ENCODE measurements at regions of chr15 and their contacts with region 1.

Region 1: GRCh38 chr15:31128919-31129768 is 27.6 kb upstream of the TRPM1 start:
- DNase-seq: peak; percentile 59 to 89 (median 74)
- ATAC-seq: peak; percentile 92
- H3K4me3 ChIP-seq: no peak overlapping the region
- H3K4me3 Mint-ChIP-seq: no peak overlapping the region
- H3K27ac ChIP-seq: no peak overlapping the region
- H3K27ac Mint-ChIP-seq: no peak overlapping the region
- H3K4me1 ChIP-seq: no peaks in the 10 kb centered on the region
- H3K4me1 Mint-ChIP-seq: peaks cover 5% of the 10 kb centered on the region
- H3K27me3 ChIP-seq: no peaks in the 10 kb centered on the region
- H3K27me3 Mint-ChIP-seq: no peaks in the 10 kb centered on the region
- CTCF ChIP-seq: peak; percentile 86

Region 2: GRCh38 chr15:30889196-30889595 is 239.9 kb before region 1 on chr15:
- CTCF ChIA-PET with region 1: interaction called, 16 read pairs
- POLR2A ChIA-PET with region 1: no interaction called
- intact Hi-C with region 1: loop called in 1 of 2 experiments (anchors 10 kb)
- DNase-seq: no peak
- ATAC-seq: no peak
- H3K4me3 ChIP-seq: no peak overlapping the region
- H3K4me3 Mint-ChIP-seq: no peak overlapping the region
- H3K27ac ChIP-seq: no peak overlapping the region
- H3K27ac Mint-ChIP-seq: no peak overlapping the region
- H3K4me1 ChIP-seq: no peaks in the 10 kb centered on the region
- H3K4me1 Mint-ChIP-seq: no peaks in the 10 kb centered on the region
- H3K27me3 ChIP-seq: no peaks in the 10 kb centered on the region
- H3K27me3 Mint-ChIP-seq: peaks cover 6% of the 10 kb centered on the region
- CTCF ChIP-seq: no peak

Region 3: DNA sequence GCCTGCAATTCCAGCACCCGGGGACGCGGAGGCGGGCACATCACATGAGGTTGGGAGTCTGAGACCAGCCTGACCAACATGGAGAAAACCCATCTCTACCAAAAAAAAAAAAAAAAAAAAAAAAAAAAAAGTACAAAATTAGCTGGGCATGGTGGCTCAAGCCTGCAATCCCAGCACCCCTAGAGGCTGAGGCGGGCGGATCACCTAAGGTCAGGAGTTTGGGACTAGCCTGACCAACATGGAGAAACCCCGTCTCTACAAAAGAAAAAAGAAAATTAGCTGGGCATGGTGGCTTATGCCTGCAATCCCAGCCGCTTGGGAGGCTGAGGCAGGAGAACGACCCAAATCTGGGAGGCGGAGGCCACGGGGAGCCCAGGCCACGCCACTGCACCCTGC is 232.9 kb before region 1 on chr15:
- CTCF ChIA-PET with region 1: interaction called, 16 read pairs
- POLR2A ChIA-PET with region 1: no interaction called
- intact Hi-C with region 1: loop called in 1 of 2 experiments (anchors 10 kb)
- DNase-seq: no peak
- ATAC-seq: no peak
- H3K4me3 ChIP-seq: no peak overlapping the region
- H3K4me3 Mint-ChIP-seq: no peak overlapping the region
- H3K27ac ChIP-seq: no peak overlapping the region
- H3K27ac Mint-ChIP-seq: no peak overlapping the region
- H3K4me1 ChIP-seq: no peaks in the 10 kb centered on the region
- H3K4me1 Mint-ChIP-seq: peaks cover 2% of the 10 kb centered on the region
- H3K27me3 ChIP-seq: no peaks in the 10 kb centered on the region
- H3K27me3 Mint-ChIP-seq: peaks cover 3% of the 10 kb centered on the region
- CTCF ChIP-seq: no peak

Region 4: DNA sequence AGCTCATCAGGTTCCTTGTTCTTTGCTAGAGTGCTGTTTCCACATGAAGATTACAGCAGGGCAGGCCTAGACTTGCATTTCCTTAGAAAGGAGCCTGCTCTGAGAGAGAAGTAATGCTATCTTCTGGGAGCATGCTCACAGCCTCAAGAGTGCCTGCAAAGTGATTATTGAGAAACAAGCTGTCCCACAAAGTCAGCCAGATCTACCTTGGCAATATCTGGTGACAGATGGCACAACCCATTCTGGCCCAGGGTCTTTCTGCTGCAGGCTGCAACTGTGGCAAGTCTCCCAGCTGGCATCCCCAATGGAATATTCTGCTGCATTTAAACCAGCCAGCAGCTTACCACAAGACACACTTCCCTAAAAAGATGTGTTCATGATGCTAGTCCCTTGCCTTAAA is 167.1 kb before region 1 on chr15:
- CTCF ChIA-PET with region 1: interaction called, 3 read pairs
- POLR2A ChIA-PET with region 1: no interaction called
- intact Hi-C with region 1: loop called in 1 of 2 experiments (anchors 10 kb)
- DNase-seq: no peak
- ATAC-seq: no peak
- H3K4me3 ChIP-seq: no peak overlapping the region
- H3K4me3 Mint-ChIP-seq: no peak overlapping the region
- H3K27ac ChIP-seq: no peak overlapping the region
- H3K27ac Mint-ChIP-seq: no peak overlapping the region
- H3K4me1 ChIP-seq: peaks cover 10% of the 10 kb centered on the region
- H3K4me1 Mint-ChIP-seq: peaks cover 25% of the 10 kb centered on the region
- H3K27me3 ChIP-seq: no peaks in the 10 kb centered on the region
- H3K27me3 Mint-ChIP-seq: no peaks in the 10 kb centered on the region
- CTCF ChIP-seq: no peak

Region 5: DNA sequence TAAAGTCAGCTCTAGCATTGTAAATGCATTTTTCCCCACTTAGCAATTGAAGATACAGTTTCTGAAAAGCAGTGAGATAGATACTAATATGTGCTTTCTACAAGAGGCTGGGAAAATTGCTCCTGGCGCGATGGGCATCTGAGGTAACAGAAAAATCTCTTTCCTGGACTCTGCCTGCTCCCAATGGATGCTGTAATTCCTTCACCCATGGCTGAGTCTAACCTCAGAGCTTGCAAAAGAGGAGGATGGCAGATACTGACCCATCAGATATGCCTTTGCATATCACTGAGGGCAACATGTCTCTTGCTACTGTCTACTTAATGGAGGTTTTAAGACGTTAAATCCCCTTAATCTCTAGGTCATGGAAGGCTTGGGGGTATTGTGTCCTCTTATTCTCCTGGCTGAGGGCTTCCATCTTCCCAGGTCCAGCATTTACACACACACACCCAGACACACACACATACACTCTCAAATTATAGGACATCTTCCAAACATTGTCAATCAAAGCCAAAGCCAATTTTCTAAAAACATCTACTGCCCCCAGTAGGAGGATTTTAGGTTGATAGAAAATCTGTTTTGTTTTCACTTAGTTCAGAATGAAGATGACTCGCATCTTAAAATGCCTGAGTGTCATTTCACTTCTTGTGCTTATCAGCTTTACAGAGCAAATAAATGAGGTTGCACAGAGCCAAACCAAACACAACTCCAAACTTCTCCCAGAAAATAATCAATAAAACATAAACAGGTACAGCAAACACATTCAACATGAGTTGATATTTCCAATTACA is 30.0 kb before region 1 on chr15:
- CTCF ChIA-PET with region 1: interaction called, 15 read pairs
- POLR2A ChIA-PET with region 1: no interaction called
- intact Hi-C with region 1: no loop called
- DNase-seq: no peak
- ATAC-seq: no peak
- H3K4me3 ChIP-seq: no peak overlapping the region
- H3K4me3 Mint-ChIP-seq: no peak overlapping the region
- H3K27ac ChIP-seq: no peak overlapping the region
- H3K27ac Mint-ChIP-seq: no peak overlapping the region
- H3K4me1 ChIP-seq: no peaks in the 10 kb centered on the region
- H3K4me1 Mint-ChIP-seq: no peaks in the 10 kb centered on the region
- H3K27me3 ChIP-seq: no peaks in the 10 kb centered on the region
- H3K27me3 Mint-ChIP-seq: no peaks in the 10 kb centered on the region
- CTCF ChIP-seq: no peak

Region 6: GRCh38 chr15:31111091-31111647 is 18.0 kb before region 1 on chr15:
- CTCF ChIA-PET with region 1: interaction called, 13 read pairs
- POLR2A ChIA-PET with region 1: no interaction called
- intact Hi-C with region 1: no loop called
- DNase-seq: no peak
- ATAC-seq: no peak
- H3K4me3 ChIP-seq: no peak overlapping the region
- H3K4me3 Mint-ChIP-seq: no peak overlapping the region
- H3K27ac ChIP-seq: no peak overlapping the region
- H3K27ac Mint-ChIP-seq: no peak overlapping the region
- H3K4me1 ChIP-seq: no peaks in the 10 kb centered on the region
- H3K4me1 Mint-ChIP-seq: no peaks in the 10 kb centered on the region
- H3K27me3 ChIP-seq: no peaks in the 10 kb centered on the region
- H3K27me3 Mint-ChIP-seq: peaks cover 7% of the 10 kb centered on the region
- CTCF ChIP-seq: no peak

Measured in CD8-positive, alpha-beta T cell (primary cell).